K562 (cell line): ENCODE measurements at regions of chr10 and their contacts with region 1.

Region 1: DNA sequence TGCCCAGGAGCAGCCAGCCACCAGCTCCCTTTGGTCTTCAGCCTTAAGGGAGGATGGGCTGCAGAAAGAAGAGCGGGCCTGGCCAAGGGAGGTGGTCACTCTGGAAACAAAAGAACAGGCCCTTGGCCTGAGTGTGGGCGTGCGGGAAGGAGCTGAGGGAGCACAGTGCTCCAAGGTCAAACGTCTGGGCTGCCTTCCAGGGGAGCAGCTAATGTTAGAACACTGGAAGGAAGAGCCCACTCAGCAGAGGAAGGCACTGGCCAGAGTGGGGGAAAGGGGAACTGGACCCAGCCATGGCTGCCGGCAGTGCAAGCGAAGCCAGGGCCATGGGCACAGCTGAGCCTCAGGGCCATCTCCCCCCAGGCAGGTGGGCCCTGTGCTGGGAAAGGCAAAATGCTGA is 42.7 kb downstream of the FAM53B start:
- DNase-seq: peak in 1 of 4 experiments; percentile 13
- ATAC-seq: no peak
- H3K4me3 ChIP-seq: no peak overlapping the region
- H3K27ac ChIP-seq: no peak overlapping the region; the same call in 2 of the 3 replicates
- H3K4me1 ChIP-seq: peaks cover 15 to 32% of the 10 kb centered on the region in 2 experiments
- H3K27me3 ChIP-seq: no peaks in the 10 kb centered on the region
- CTCF ChIP-seq: no peak
- EP300 ChIP-seq: no peak
- POLR2A ChIP-seq: no peak
- RAD21 ChIP-seq: no peak

Region 2: DNA sequence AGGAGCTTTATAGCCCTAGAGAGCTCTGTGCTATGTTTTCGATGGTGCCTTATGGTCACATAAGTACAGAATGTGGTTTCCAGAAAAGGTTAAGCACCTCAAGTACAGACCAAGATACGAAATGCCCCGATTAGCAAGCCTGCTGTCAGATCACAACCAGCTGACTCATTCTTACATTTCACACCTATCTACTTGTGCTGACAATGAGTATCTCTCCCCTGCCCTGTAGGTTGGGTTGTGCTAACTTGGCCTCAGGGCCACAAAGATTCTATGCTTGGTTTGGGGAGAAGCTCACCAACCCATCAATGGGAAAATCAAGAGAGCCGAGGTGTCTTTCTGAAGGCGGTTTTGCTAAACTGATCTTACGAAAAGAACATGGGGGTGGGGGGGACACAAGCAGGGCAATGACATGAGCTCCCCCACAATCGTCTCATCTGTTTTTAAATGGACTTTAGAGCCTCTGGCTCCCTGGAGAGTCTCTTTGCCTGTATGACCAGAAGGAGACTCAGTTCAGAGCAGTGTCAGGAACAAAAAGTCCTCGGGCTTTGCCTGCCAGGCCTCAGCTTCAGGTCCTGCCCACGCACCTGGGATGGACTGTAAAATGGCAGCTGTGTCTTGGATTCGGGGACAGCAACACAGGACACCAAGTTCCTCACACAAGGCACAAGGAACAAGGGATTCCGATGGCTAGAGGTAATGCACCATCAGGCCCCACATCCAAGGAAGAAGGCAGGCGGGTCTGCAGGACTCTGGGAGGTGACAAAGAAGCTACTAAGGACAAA is 12.4 kb before region 1 on chr10:
- CTCF ChIA-PET with region 1: no interaction called
- POLR2A ChIA-PET with region 1: interaction called, 10 read pairs
- in situ Hi-C with region 1: no loop called
- intact Hi-C with region 1: no loop called
- DNase-seq: peak; percentile 18 to 70 (median 34)
- ATAC-seq: peak; percentile 51
- H3K4me3 ChIP-seq: no peak overlapping the region
- H3K27ac ChIP-seq: peak overlapping the region; percentile 33; the same call in 2 of the 3 replicates
- H3K4me1 ChIP-seq: peaks cover 47 to 48% of the 10 kb centered on the region in 2 experiments
- H3K27me3 ChIP-seq: no peaks in the 10 kb centered on the region
- CTCF ChIP-seq: no peak
- EP300 ChIP-seq: peak; percentile 49; the same call in 1 of the 2 replicates
- POLR2A ChIP-seq: no peak
- RAD21 ChIP-seq: no peak

Region 3: DNA sequence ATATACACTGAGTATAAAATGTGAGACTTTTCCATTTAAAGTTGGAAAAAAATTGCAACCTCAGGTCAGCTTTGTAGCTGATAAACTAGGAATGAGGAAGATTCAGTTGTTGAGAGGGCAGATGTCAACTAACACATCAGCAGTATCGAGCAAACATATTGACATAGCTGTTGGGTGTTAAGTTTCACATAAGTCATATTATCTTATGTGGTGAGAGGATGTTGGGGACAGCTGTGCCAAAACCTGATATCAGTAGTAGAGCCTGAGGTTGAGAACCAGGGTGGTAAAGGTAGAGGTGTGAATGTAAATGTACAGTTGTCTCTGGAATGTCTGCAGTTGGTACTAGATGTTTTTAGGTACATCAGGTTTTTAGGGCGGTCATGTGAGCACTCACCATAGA is 245.5 kb after region 1 on chr10:
- CTCF ChIA-PET with region 1: no interaction called
- POLR2A ChIA-PET with region 1: no interaction called
- in situ Hi-C with region 1: no loop called
- intact Hi-C with region 1: no loop called
- DNase-seq: peak; percentile 3 to 36 (median 10)
- ATAC-seq: peak; percentile 73
- H3K4me3 ChIP-seq: no peak overlapping the region
- H3K27ac ChIP-seq: no peak overlapping the region; the same call in 2 of the 3 replicates
- H3K4me1 ChIP-seq: peaks cover 0 to 12% of the 10 kb centered on the region in 2 experiments; a peak in 2 of 5 replicates
- H3K27me3 ChIP-seq: no peaks in the 10 kb centered on the region
- CTCF ChIP-seq: no peak
- EP300 ChIP-seq: peak; percentile 80
- POLR2A ChIP-seq: no peak
- RAD21 ChIP-seq: no peak